ENCODE measurements at regions of chr12 and their contacts with region 1.

Region 1: DNA sequence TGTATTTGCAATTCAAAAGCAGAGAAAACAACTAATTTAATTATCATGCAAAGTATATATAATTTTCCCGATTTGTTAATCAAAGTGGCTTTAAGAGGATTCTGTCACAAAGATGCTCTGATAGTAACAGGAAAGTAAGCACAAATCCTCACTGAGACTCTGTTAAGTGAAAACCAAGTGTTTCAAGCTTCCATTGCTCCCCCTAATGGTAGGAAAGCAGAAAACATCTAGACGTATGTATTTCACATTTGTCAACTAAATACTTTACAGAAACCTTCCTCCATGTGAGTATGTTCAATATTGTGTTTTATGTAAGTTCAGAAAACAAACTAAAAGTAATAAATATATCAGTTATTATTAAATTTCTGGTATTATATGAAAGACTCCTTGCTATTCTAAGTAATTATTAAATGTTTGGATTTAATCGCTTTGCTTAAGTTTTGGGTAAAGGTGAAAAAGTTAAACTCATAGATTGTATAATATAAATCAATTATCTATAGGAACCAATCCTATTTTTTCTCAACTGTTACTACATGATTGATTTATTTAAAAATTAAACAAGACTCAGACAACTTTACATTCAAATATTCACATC is 1.5 kb upstream of the NTS start:
- DNase-seq: no peak
- H3K4me3 ChIP-seq: no peak overlapping the region
- H3K27me3 ChIP-seq: 0 out of 2 replicates have a peak, but pooled peaks cover 3% of the 10 kb centered on the region
- CTCF ChIP-seq: peak; percentile 80

Region 2: DNA sequence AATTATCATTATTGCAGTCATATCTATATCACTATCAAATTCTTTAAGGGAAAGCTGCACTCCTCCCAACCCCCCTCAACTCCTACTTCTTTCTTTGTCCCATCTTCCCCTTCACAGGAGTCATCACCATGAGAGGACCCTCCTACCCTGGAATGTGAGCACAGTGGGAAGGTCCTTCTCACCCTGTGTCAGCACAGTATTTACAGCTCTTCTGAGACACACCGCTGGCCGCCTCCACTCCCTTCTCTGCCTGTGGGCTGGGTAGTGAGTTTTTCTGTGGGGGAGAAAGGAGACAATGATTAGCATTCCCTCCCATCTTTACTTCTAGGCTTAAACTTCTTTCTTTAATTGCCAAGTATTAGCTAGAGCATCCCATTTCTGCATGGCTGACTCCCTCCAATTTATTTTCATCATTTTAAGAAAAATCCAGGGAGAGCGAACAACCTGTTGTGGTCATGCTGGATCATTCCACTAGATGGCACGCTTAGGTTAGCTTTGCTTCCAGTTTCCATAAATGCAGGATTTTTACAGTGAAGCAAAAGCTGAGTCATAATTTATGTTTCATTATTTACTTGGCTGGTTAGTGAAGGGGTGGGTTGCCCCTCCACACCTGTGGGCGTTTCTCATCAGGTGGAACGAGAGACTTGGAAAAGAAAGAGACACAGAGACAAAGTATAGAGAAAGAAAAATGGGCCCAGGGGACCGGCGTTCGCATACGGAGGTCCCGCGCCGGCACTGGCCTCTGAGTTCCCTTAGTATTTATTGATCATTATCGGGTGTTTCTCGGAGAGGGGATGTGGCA is 404.0 kb before region 1 on chr12:
- CTCF ChIA-PET with region 1: interaction called, 49 read pairs
- POLR2A ChIA-PET with region 1: no interaction called
- DNase-seq: peak; percentile 10
- H3K4me3 ChIP-seq: peak overlapping the region; percentile 21
- H3K27me3 ChIP-seq: no peaks in the 10 kb centered on the region
- CTCF ChIP-seq: peak; percentile 84

Measured in BJ (cell line).